SK-N-SH (cell line): ENCODE measurements at regions of chr12 and their contacts with region 1.

Region 1: DNA sequence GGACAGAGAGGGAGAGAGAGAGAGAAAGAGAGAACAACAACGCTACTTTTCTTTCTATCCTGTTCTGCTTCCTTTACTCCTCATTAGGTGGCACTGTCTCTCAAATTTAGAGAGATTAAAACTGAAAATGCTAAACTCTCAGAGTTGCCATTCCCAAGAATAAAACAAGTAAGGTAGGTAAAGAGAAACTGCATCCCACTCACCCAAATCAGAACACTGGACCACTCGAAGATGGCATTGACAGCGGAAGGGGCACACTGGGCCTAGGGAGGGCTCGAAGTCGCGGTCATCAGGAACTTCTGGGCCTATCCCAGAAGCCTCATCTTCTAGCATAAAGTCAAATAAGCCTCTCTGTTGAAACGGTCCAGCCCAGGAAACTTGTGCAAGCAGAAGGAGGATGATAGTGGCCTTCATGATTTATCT is 4.5 kb downstream of the DCN start:
- DNase-seq: no peak
- H3K4me3 ChIP-seq: no peak overlapping the region
- H3K27ac ChIP-seq: peak overlapping the region in 1 of 2 experiments; percentile 24; a peak in 1 of 4 replicates
- H3K4me1 ChIP-seq: peaks cover 11 to 28% of the 10 kb centered on the region in 2 experiments; a peak in 3 of 4 replicates
- H3K27me3 ChIP-seq: no peaks in the 10 kb centered on the region
- CTCF ChIP-seq: peak; percentile 50
- EP300 ChIP-seq: no peak
- RAD21 ChIP-seq: peak; percentile 81

Region 2: GRCh38 chr12:91326058-91327027 is 148.2 kb after region 1 on chr12:
- CTCF ChIA-PET with region 1: interaction called, 95 read pairs
- POLR2A ChIA-PET with region 1: no interaction called
- DNase-seq: peak; percentile 26
- H3K4me3 ChIP-seq: peak overlapping the region in 1 of 2 experiments; percentile 45; a peak in 1 of 4 replicates
- H3K27ac ChIP-seq: peak overlapping the region; percentile 70 to 91; a peak in 3 of 4 replicates
- H3K4me1 ChIP-seq: no peaks in the 10 kb centered on the region; a peak in 1 of 4 replicates
- H3K27me3 ChIP-seq: no peaks in the 10 kb centered on the region
- CTCF ChIP-seq: peak; percentile 86
- EP300 ChIP-seq: peak; percentile 71 to 76; a peak in 3 of 4 replicates
- RAD21 ChIP-seq: peak; percentile 80

Region 3: DNA sequence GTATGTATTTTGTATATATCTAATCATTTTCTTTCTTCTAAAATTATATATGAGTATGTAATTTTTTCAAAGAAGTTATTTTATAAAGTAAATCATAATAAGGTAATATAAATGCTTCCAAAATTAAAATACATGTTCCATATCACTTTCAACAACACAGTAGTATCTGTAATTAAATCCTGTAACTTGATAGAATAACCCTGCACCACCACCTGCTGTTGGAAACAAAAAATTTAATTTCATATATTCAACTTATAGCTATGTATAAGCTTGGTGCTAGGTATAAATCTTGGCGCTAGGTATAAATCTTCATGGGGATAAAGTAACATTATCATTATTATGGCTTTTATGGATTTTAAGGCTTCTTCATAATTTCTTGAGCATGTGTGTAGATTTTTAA is 154.2 kb after region 1 on chr12:
- CTCF ChIA-PET with region 1: interaction called, 95 read pairs
- POLR2A ChIA-PET with region 1: no interaction called
- DNase-seq: no peak
- H3K4me3 ChIP-seq: no peak overlapping the region
- H3K27ac ChIP-seq: no peak overlapping the region
- H3K4me1 ChIP-seq: no peaks in the 10 kb centered on the region; a peak in 1 of 4 replicates
- H3K27me3 ChIP-seq: no peaks in the 10 kb centered on the region
- CTCF ChIP-seq: peak; percentile 43
- EP300 ChIP-seq: no peak
- RAD21 ChIP-seq: peak; percentile 59

Region 4: GRCh38 chr12:91460469-91460868 is 282.3 kb after region 1 on chr12:
- CTCF ChIA-PET with region 1: no interaction called
- POLR2A ChIA-PET with region 1: no interaction called
- DNase-seq: peak; percentile 27
- H3K4me3 ChIP-seq: no peak overlapping the region
- H3K27ac ChIP-seq: no peak overlapping the region; a peak in 1 of 4 replicates
- H3K4me1 ChIP-seq: no peaks in the 10 kb centered on the region
- H3K27me3 ChIP-seq: no peaks in the 10 kb centered on the region
- CTCF ChIP-seq: no peak
- EP300 ChIP-seq: no peak
- RAD21 ChIP-seq: no peak